Heart right ventricle (tissue), 16 donors: ENCODE measurements at regions of chr7 and their contacts with region 1.

Region 1: DNA sequence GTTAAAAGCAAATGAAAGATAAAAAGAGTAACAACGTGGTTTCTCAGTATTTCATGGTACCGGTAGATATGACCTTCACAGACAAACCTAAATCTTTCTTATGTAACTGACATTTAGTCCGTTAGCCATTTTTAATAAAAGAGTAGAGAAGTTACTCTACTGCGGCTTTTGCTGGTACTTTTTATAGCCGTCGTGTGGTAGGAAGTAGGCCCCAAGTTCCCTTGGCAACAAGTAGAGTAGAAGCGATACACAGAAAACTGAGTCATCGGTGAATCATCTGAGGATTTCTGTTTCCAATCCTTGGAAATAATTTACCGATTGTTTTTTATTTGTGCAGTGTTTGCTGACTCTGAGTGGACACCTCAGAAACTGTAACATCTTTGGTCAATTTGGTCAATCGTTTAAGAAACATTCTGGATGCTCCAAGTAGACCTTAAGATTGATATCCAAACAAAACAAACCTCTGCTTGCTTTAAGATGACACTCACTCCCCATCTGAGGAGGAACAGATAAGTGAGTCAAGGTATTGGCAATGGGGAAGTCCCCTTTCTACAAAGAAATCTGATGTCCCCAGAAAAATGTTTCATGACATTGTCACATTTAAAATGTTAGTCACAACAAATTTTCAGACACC is 63.9 kb upstream of the AHR start:
- DNase-seq: peak in 1 of 2 donors; percentile 41
- ATAC-seq: peak in 7 of 8 donors; percentile 65 to 82 (median 76)
- H3K4me3 ChIP-seq: peak overlapping the region in 1 of 10 donors; percentile 4
- H3K27ac ChIP-seq: peak overlapping the region in 6 of 10 donors; percentile 27 to 76 (median 46)
- H3K4me1 ChIP-seq: peaks cover 0 to 43% (median 29%) of the 10 kb centered on the region in 9 donors
- H3K27me3 ChIP-seq: no peaks in the 10 kb centered on the region
- CTCF ChIP-seq: peak in 1 of 9 donors; percentile 6

Region 2: DNA sequence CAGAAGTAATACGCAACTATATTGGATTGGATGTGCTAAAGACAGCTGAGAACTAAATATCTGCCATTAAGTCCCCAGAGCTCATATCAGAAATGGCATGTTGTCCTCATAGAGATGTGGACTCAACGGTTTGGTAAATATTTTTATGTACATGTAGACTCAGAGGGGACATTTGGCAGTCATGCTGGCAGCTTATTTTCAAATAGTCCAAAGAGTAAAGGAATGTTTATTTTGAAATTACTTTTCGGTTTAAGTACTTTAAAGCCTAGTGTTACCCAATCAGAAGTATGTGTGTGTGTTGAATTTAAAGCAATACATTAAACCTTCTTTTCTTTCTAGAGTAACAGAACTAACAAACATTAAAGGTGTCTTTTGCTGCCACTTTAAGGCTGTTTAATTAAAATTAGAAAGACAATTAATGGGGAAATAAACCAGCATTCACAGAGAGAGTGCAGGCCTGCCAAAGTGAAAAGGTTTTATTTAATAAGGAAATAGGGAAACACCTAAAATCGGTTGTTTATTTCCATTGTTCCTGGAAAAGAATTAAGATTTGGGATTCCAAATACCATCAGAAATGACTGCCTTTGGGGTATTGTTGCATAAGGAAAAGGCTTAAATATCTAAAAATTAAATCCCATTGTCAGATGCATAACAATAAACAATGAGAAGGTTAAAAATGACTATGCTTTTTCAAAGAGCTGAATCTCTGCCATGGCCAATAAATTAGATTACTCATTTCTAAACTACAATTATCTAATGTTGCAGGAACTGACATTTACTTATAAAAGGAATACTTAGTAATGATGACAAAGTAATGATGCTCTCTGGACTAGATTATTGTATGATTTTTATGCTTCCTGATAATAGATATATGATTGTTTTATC is 49.5 kb before region 1 on chr7:
- intact Hi-C with region 1: loop called in 1 of 10 experiments (anchors 5 kb)
- DNase-seq: no peak
- ATAC-seq: no peak
- H3K4me3 ChIP-seq: no peak overlapping the region
- H3K27ac ChIP-seq: peak overlapping the region in 1 of 10 donors; percentile 5
- H3K4me1 ChIP-seq: peaks cover 0 to 16% (median 0%) of the 10 kb centered on the region in 9 donors
- H3K27me3 ChIP-seq: no peaks in the 10 kb centered on the region
- CTCF ChIP-seq: no peak

Region 3: DNA sequence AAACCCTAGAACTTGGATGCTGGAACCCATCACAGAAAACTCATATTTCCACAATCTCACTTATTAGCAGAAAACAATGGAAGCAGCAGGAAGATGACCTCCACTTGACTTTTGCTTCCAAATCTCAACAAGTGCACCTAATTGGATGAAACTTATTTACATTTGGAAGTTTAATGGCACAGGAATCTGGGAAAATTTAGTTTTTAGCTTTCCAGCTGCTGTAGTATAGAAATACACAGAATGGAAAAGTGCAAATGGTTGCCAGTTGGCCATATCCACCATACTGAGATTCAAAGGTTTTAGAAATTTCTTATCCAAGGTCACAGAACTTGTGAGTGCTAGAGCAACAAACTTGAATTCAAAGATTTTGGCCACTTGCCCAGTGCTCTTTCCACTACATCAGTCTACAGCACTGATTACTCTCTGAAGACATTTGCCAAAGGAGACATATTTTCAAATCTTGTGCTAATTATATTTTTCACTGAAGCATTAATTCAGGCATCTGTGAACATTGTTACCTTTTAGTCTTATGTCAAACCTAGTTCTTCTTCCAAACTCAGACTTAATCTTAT is 54.6 kb after region 1 on chr7:
- intact Hi-C with region 1: loop called in 1 of 10 experiments (anchors 10 kb)
- DNase-seq: peak in 1 of 2 donors; percentile 85
- ATAC-seq: peak; percentile 81 to 95 (median 84)
- H3K4me3 ChIP-seq: no peak overlapping the region
- H3K27ac ChIP-seq: peak overlapping the region in 6 of 10 donors; percentile 29 to 71 (median 56)
- H3K4me1 ChIP-seq: peaks cover 9 to 38% (median 21%) of the 10 kb centered on the region in 9 donors
- H3K27me3 ChIP-seq: no peaks in the 10 kb centered on the region
- CTCF ChIP-seq: no peak